ENCODE measurements at regions of chr1 and their contacts with region 1.

Region 1: DNA sequence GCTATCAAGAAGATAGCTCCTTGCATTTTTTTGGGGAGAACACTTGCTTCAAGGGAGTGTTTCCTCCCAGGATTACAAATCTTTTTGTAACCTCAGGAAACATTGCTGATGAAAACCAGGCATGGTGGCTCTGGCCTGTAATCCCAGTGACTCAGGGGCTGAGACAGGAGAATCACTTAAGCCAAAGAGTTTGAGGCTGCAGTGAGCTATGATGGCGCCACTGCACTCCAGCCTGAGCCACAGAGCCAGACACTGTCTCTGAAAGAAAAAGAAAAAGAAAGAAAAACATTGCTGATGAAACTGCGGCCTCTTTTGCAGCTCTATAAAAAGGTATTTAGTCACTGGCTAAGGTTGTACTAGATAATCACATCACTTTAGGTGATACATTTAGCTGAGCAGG is 7.3 kb downstream of the RNU1-2 start:
- DNase-seq: no peak
- H3K4me3 ChIP-seq: no peak overlapping the region
- H3K27ac ChIP-seq: peak overlapping the region; percentile 100
- H3K4me1 ChIP-seq: peaks cover 18% of the 10 kb centered on the region
- H3K27me3 ChIP-seq: no peaks in the 10 kb centered on the region
- CTCF ChIP-seq: no peak

Region 2: DNA sequence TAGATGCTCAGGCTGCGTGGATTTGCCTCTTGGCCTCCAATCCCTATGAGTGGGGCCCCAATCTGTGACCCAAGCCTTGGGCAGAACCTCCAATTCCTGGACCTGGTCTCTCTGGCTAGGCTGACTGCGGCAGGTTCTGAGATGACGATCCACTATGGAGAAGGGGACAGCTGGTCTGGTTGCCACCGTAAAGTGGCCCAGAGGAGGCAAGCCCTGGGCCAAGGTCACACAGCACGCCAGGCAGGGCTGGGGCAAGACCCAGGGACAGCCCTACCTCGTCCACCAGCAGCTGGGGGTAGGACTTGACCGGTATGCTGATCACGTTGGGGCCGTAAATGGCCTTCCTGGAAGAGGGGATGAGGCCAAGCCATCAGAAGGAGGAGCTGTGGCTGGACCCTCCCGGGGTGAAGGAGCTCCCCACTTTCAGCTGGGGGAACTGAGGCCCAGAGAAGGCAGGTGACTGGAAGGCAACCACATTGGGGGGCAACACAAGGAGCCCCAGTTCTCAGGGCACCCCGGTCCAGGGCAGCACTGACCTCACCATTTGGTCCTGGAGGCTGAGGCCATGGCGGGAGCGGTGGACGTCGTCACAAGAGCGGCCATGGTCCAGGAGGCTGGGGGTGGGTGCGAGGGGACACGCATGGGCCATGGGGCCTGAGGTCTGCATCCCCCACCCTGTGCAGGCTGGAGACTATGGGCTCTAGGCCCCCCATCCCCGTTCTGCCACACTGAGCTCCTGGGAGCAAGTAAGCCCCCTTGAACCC is 98.9 kb after region 1 on chr1:
- CTCF ChIA-PET with region 1: no interaction called
- POLR2A ChIA-PET with region 1: interaction called, 10 read pairs
- intact Hi-C with region 1: no loop called
- DNase-seq: no peak
- H3K4me3 ChIP-seq: no peak overlapping the region
- H3K27ac ChIP-seq: no peak overlapping the region
- H3K4me1 ChIP-seq: no peaks in the 10 kb centered on the region
- H3K27me3 ChIP-seq: no peaks in the 10 kb centered on the region
- CTCF ChIP-seq: no peak

Measured in A673 (cell line).